ENCODE measurements at regions of chr3 and their contacts with region 1.

Region 1: GRCh38 chr3:172106989-172107388 is 67.6 kb downstream of the FNDC3B start:
- DNase-seq: peak; percentile 71
- H3K4me3 Mint-ChIP-seq: peak overlapping the region; percentile 75
- H3K27ac Mint-ChIP-seq: peak overlapping the region; percentile 90
- H3K4me1 Mint-ChIP-seq: peaks cover 64% of the 10 kb centered on the region
- H3K27me3 Mint-ChIP-seq: no peaks in the 10 kb centered on the region

Region 2: DNA sequence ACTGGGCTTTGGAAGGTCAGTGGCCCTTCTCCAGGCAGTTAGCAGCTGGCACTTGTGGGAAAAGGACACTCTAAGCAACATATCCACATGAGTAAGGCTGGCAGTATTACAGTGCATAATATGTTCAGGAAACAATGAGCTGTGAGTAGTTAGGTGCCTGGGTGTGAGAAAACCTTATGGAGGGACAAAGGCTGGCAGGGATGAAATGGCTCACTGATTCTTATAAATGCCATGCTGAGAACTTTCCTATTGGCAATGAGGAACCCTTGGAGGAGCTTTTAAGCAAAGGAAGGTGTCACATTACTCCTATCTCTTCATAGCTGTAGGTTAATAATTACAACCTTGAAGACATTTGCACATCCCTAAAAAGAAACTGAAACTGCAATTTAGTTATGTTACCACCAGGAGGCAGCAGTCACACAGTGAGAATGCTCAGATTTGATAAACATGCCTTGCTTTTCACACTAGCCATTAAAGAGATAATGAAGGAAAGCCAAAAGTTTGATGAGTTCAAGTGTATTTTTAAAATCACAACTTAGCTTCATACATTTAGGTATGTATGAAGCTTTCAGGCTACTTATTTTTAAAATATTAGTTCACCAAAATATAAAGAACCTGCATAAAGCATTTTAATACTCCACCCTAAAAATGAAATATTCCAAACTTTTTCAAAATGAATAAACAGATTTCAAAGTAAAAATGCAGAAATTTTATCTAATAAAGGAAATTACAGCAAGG is 943.8 kb before region 1 on chr3:
- intact Hi-C with region 1: no loop called
- DNase-seq: no peak
- H3K4me3 Mint-ChIP-seq: no peak overlapping the region
- H3K27ac Mint-ChIP-seq: no peak overlapping the region
- H3K4me1 Mint-ChIP-seq: peaks cover 18% of the 10 kb centered on the region
- H3K27me3 Mint-ChIP-seq: no peaks in the 10 kb centered on the region

Region 3: GRCh38 chr3:171809821-171810628 is 297.0 kb before region 1 on chr3 and contains the start of gene PLD1:
- intact Hi-C with region 1: loop called (anchors 1 kb)
- DNase-seq: peak; percentile 51
- H3K4me3 Mint-ChIP-seq: peak within 1 kb of the TSS; percentile 77
- H3K27ac Mint-ChIP-seq: peak within 1 kb of the TSS; percentile 47
- H3K4me1 Mint-ChIP-seq: peaks cover 43% of the 10 kb centered on the region
- H3K27me3 Mint-ChIP-seq: peaks cover 24% of the 10 kb centered on the region
- total RNA-seq, gene PLD1: 1.0 and 1.1 TPM in 2 replicates

Region 4: DNA sequence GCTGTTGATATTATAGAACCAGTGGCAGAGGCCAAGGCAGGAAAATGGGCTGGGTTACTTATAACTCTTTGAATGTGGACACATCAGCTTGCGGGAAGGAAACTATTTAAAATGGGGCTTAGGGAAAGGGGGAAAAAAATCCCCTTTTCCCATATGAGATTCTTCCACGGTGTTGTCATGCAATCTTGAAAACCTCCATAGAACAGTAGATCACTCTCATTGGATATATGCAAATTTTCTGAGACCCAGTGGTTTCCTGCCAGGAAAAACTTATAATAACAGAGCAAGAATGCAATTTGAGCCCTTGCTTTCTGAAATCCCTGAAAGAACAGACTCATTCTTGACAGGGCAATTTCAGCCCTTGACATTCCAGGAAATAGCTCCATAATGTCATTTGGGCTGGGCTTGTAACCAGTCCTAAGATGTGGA is 232.7 kb before region 1 on chr3:
- intact Hi-C with region 1: loop called (anchors 1 kb)
- DNase-seq: no peak
- H3K4me3 Mint-ChIP-seq: no peak overlapping the region
- H3K27ac Mint-ChIP-seq: no peak overlapping the region
- H3K4me1 Mint-ChIP-seq: peaks cover 24% of the 10 kb centered on the region
- H3K27me3 Mint-ChIP-seq: peaks cover 20% of the 10 kb centered on the region

Region 5: GRCh38 chr3:172087602-172088580 is 19.1 kb before region 1 on chr3:
- intact Hi-C with region 1: loop called (anchors 1 kb)
- DNase-seq: no peak
- H3K4me3 Mint-ChIP-seq: no peak overlapping the region
- H3K27ac Mint-ChIP-seq: peak overlapping the region; percentile 62
- H3K4me1 Mint-ChIP-seq: peaks cover 55% of the 10 kb centered on the region
- H3K27me3 Mint-ChIP-seq: no peaks in the 10 kb centered on the region

Region 6: DNA sequence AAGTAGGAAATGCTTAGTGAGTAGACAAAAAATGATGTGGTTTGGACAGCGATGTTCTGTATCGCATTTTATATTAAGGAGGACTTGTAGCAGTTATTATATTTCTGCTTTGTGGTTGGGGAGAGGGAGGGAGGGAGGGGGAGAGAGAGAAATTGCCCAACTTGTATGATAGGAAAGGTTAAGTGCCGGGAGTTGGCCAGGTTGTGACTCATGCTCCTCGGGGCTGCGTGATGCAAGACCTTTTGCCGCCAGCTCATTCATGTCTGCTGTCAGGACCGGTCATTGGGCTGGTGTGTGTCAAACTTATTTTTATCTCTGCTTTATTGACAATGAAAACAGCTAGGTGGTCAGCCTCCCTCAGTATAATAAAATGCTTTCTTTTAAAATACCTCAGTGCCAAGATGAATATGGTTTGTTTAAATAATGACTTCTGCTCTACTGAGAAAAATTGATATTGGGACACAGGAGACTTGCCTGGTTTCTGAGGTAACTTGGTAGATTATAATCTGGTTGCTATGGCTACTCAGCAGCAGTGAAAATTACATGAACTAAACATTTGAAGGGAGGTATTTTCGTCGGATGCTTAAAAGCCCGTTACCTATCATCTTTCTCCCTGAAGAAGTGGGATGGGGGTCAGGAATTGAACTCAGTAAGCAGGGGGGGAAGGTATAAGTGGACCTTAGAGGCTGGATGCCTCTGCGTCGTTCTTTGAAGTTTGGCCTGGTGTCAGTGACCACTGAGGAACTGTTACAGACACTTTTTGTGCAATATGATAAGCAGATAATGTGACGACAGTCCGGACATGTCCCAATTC is 23.1 kb after region 1 on chr3:
- intact Hi-C with region 1: loop called (anchors 1 kb)
- DNase-seq: peak; percentile 36
- H3K4me3 Mint-ChIP-seq: no peak overlapping the region
- H3K27ac Mint-ChIP-seq: peak overlapping the region; percentile 82
- H3K4me1 Mint-ChIP-seq: peaks cover 60% of the 10 kb centered on the region
- H3K27me3 Mint-ChIP-seq: no peaks in the 10 kb centered on the region

Region 7: GRCh38 chr3:172209333-172210321 is 102.6 kb after region 1 on chr3:
- intact Hi-C with region 1: loop called (anchors 2 kb)
- DNase-seq: no peak
- H3K4me3 Mint-ChIP-seq: no peak overlapping the region
- H3K27ac Mint-ChIP-seq: no peak overlapping the region
- H3K4me1 Mint-ChIP-seq: peaks cover 27% of the 10 kb centered on the region
- H3K27me3 Mint-ChIP-seq: no peaks in the 10 kb centered on the region